K562 (cell line): ENCODE measurements at regions of chr12 and their contacts with region 1.

Region 1: DNA sequence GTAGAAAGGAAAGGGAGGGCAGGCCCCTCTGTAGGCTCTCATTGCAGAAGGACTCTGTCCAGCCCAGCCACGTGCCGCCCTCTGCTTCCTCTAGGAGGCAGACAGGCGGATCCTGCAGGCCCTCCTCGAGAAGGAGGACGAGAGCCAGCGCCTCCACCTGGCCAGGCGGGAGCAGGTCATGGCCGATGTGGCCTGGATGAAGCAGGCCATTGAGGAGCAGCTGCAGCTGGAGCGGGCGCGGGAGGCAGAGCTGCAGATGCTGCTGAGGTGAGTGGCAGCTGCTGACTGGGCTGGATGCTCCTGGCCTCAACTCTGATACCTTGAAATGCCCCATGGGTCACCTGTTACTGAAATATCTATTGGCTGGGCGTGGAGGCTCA is 10.9 kb downstream of the TCHP start:
- DNase-seq: peak; percentile 75 to 81 (median 78)
- ATAC-seq: peak; percentile 100
- H3K4me3 ChIP-seq: no peak overlapping the region
- H3K27ac ChIP-seq: no peak overlapping the region
- H3K4me1 ChIP-seq: peaks cover 0 to 3% of the 10 kb centered on the region in 2 experiments; a peak in 1 of 5 replicates
- H3K27me3 ChIP-seq: no peaks in the 10 kb centered on the region
- CTCF ChIP-seq: peak; percentile 86 to 100 (median 98)
- EP300 ChIP-seq: no peak
- POLR2A ChIP-seq: no peak
- RAD21 ChIP-seq: peak in 1 of 2 experiments; percentile 62; a peak in 2 of 4 replicates

Region 2: GRCh38 chr12:109899783-109900751 is 10.9 kb before region 1 on chr12 and contains the start of gene TCHP:
- CTCF ChIA-PET with region 1: no interaction called
- POLR2A ChIA-PET with region 1: interaction called, 13 read pairs
- in situ Hi-C with region 1: no loop called
- intact Hi-C with region 1: no loop called
- DNase-seq: peak; percentile 87 to 90 (median 88)
- ATAC-seq: peak; percentile 93
- H3K4me3 ChIP-seq: peak within 1 kb of the TSS; percentile 57
- H3K27ac ChIP-seq: peak within 1 kb of the TSS; percentile 72
- H3K4me1 ChIP-seq: peaks cover 4 to 10% of the 10 kb centered on the region in 2 experiments; a peak in 3 of 5 replicates
- H3K27me3 ChIP-seq: peaks cover 2 to 7% of the 10 kb centered on the region in 2 experiments; a peak in 2 of 5 replicates
- CTCF ChIP-seq: peak; percentile 56 to 62 (median 59)
- EP300 ChIP-seq: 0 out of 2 replicates have a peak, but pooled peaks have one; percentile 21
- POLR2A ChIP-seq: peak; percentile 77
- RAD21 ChIP-seq: peak in 1 of 2 experiments; percentile 40; a peak in 2 of 4 replicates
- polyA plus RNA-seq, gene TCHP: 3.4 to 4.7 TPM